SK-N-SH (cell line): ENCODE measurements at regions of chr15 and their contacts with region 1.

Region 1: GRCh38 chr15:74291101-74292071 is 55.3 kb downstream of the CCDC33 start:
- DNase-seq: peak; percentile 85
- H3K4me3 ChIP-seq: no peak overlapping the region; a peak in 1 of 4 replicates
- H3K27ac ChIP-seq: peak overlapping the region; percentile 40 to 100; a peak in 3 of 4 replicates
- H3K4me1 ChIP-seq: peaks cover 5 to 70% of the 10 kb centered on the region in 2 experiments; a peak in 3 of 4 replicates
- H3K27me3 ChIP-seq: no peaks in the 10 kb centered on the region
- CTCF ChIP-seq: no peak
- EP300 ChIP-seq: peak; percentile 61 to 99
- RAD21 ChIP-seq: peak; percentile 42

Region 2: DNA sequence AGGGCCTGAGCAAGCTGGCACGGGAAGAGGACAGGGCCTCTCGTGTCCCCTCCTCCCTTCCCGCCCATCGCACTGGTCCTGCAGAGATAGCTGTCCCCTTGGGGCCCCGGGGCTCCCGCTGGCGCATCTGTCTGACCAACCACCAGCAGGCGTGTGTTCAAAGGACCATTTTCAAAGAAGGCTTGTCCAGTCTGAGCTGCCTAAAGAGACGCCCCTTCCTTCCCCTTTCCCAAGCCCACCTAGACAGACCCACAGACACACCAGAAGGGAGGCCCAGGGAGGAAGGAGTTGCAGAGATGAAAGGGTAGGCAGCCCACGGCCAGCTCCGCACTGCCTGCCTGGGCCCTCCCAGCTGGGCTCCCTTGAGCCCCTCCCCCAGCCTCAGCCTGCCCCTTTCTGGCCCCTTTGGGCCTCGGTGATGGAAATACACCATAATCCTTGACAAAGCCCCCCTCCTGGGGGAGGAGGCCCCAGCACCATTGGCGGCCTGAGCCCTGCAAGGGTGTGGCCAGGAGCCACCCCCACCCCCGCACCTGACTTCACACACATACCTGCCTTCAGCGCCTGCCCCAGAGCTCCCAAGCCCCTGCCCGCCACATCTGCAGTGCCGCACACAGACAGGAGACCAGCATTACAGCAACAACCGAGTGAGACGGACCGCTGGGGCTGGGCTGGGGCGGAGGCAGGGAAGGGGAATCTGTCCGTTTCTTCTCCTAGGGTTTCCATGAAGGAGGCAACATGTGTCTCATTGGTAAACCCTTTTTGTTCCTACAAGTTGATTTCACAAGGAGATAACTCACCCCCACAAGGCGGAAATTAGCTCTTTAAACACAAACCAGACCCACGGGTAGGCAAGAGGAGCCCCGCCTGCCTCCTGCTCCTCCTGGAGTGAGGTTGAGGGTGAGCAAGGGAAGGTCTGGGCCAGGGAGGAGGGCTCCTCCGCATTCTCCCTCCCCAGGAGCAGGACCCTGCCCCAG is 88.6 kb before region 1 on chr15 and contains the start of gene STRA6:
- CTCF ChIA-PET with region 1: interaction called, 14 read pairs
- POLR2A ChIA-PET with region 1: interaction called, 54 read pairs
- DNase-seq: peak; percentile 90
- H3K4me3 ChIP-seq: peak within 1 kb of the TSS; percentile 18 to 50; a peak in 3 of 4 replicates
- H3K27ac ChIP-seq: peak within 1 kb of the TSS; percentile 80 to 97
- H3K4me1 ChIP-seq: peaks cover 64 to 95% of the 10 kb centered on the region in 2 experiments
- H3K27me3 ChIP-seq: no peaks in the 10 kb centered on the region
- CTCF ChIP-seq: peak; percentile 35
- EP300 ChIP-seq: peak; percentile 17 to 48; a peak in 1 of 4 replicates
- RAD21 ChIP-seq: peak; percentile 45; the same call in 1 of the 2 replicates
- polyA plus RNA-seq, gene STRA6: 27.9 and 31.0 TPM in 2 replicates

Region 3: GRCh38 chr15:74228723-74229081 is 62.7 kb before region 1 on chr15:
- CTCF ChIA-PET with region 1: interaction called, 15 read pairs
- POLR2A ChIA-PET with region 1: interaction called, 14 read pairs
- DNase-seq: peak; percentile 87
- H3K4me3 ChIP-seq: no peak overlapping the region
- H3K27ac ChIP-seq: peak overlapping the region; percentile 72 to 100
- H3K4me1 ChIP-seq: peaks cover 35 to 84% of the 10 kb centered on the region in 2 experiments
- H3K27me3 ChIP-seq: no peaks in the 10 kb centered on the region
- CTCF ChIP-seq: no peak
- EP300 ChIP-seq: peak in 1 of 2 experiments; percentile 91; a peak in 3 of 4 replicates
- RAD21 ChIP-seq: peak; percentile 46

Region 4: DNA sequence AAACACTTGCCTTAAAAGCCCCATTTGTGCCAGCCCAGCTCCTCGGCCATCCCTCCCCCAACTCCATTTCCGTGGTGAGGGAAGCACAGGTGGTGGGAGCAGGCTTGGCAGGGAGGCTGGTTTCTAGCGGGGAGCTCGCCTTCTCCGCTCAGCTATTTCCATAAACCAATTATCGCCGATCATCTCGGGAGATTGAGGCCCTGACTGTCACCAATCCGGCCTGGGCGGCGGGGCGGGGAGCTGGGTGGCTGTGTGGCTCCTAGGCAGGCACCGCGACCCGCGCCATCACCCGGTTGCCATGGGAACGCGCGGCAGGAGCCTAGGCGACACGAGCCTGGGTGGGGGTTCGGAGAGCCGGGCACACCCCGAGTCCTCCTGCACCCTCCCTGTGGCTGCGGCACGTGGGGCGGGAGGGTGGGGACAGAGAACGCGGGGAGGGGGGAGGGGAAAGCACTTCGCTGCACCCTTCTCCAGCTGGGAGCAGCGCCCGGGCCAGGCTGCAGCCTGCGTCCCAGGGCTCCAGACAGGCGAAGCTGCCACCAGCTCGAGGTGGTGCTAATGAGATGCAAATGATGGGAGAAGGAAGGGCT is 45.9 kb before region 1 on chr15:
- CTCF ChIA-PET with region 1: interaction called, 7 read pairs
- POLR2A ChIA-PET with region 1: interaction called, 13 read pairs
- DNase-seq: peak; percentile 94
- H3K4me3 ChIP-seq: peak overlapping the region in 1 of 2 experiments; percentile 4; a peak in 1 of 4 replicates
- H3K27ac ChIP-seq: peak overlapping the region in 1 of 2 experiments; percentile 94; a peak in 2 of 4 replicates
- H3K4me1 ChIP-seq: peaks cover 31 to 58% of the 10 kb centered on the region in 2 experiments
- H3K27me3 ChIP-seq: no peaks in the 10 kb centered on the region
- CTCF ChIP-seq: no peak
- EP300 ChIP-seq: peak in 1 of 2 experiments; percentile 82; a peak in 2 of 4 replicates
- RAD21 ChIP-seq: peak; percentile 40

Region 5: DNA sequence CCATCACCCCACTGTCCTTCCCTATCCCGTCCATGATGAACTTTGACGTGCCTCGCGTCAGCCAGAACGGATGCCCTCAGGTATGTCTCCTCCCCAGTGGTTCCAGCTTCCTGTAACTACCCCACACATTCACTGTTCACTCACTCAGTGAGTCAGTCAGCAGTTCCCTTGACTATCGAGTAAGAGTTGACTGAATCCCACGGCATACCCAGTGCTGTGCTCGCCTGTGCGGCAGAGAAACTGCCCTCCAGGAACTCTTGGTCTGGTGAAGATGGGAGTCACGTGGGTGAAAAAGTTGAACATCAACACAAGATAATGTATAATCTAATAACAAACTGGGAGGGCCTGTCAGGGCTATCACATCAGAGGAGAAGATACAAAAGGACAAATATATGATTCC is 18.6 kb before region 1 on chr15:
- CTCF ChIA-PET with region 1: no interaction called
- POLR2A ChIA-PET with region 1: no interaction called
- DNase-seq: no peak
- H3K4me3 ChIP-seq: no peak overlapping the region
- H3K27ac ChIP-seq: no peak overlapping the region
- H3K4me1 ChIP-seq: peaks cover 0 to 30% of the 10 kb centered on the region in 2 experiments; a peak in 1 of 4 replicates
- H3K27me3 ChIP-seq: peaks cover 7% of the 10 kb centered on the region; the same call in 1 of the 2 replicates
- CTCF ChIP-seq: no peak
- EP300 ChIP-seq: no peak
- RAD21 ChIP-seq: no peak

Region 6: GRCh38 chr15:74302821-74303359 is 11.5 kb after region 1 on chr15:
- CTCF ChIA-PET with region 1: interaction called, 55 read pairs
- POLR2A ChIA-PET with region 1: interaction called, 7 read pairs
- DNase-seq: peak; percentile 93
- H3K4me3 ChIP-seq: no peak overlapping the region; a peak in 1 of 4 replicates
- H3K27ac ChIP-seq: peak overlapping the region in 1 of 2 experiments; percentile 95; a peak in 2 of 4 replicates
- H3K4me1 ChIP-seq: peaks cover 0 to 50% of the 10 kb centered on the region in 2 experiments; a peak in 2 of 4 replicates
- H3K27me3 ChIP-seq: no peaks in the 10 kb centered on the region
- CTCF ChIP-seq: peak; percentile 77
- EP300 ChIP-seq: peak in 1 of 2 experiments; percentile 90; a peak in 2 of 4 replicates
- RAD21 ChIP-seq: peak; percentile 87

Region 7: DNA sequence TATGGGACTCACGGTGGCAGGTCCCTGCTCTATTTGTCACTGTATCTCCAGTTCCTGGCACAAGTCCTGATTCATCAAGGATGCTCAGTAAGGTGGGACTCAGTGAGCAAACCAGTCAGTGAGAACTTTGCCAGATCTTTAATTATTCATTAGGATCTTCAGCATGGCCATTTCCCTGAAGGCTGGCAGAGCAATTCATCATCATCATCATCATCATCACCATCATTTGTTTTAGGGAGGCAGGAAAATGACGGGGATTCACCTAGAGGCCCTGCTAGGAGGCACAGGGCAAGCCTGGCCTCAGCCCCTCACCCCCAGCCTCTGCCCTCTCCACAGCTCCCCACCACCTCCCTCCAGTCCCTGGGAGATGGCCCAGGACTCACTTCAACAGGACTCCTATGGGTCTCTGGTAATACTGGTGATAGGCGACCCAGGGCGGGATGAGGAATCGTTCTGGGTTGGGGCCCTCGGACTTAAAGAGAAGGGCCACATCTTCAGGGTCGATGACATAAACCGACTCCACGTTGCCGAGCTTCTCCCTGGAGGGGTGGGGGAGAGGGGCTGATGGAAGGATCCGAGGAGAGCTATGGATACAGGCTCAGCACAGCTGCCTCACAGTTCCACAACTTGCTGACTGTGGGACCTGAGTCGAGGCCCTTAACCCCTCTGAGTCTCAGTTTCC is 56.3 kb after region 1 on chr15:
- CTCF ChIA-PET with region 1: no interaction called
- POLR2A ChIA-PET with region 1: no interaction called
- DNase-seq: no peak
- H3K4me3 ChIP-seq: no peak overlapping the region
- H3K27ac ChIP-seq: no peak overlapping the region
- H3K4me1 ChIP-seq: no peaks in the 10 kb centered on the region
- H3K27me3 ChIP-seq: peaks cover 6% of the 10 kb centered on the region; the same call in 1 of the 2 replicates
- CTCF ChIP-seq: no peak
- EP300 ChIP-seq: no peak
- RAD21 ChIP-seq: no peak